ENCODE measurements at regions of chr5 and their contacts with region 1.

Region 1: DNA sequence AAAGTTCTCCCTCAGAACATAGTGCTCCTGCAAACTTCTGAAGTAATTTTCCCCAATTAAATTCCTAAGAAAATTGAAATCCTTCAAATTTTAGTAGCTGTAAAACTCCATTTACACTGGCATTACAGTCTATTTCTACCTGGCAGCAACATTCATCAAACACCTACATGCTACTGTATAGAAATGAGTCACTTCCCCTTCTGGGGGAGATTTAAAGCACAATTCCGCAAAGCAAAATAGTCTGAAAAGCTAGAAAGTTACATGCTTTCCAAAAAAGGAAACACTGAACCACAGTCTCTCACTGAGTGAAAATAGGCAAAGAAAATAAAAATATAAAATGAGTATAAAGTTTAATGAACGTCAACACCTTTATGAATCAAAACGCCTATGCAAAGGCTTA is 43.3 kb downstream of the MCTP1 start:
- DNase-seq: no peak
- H3K4me3 ChIP-seq: no peak overlapping the region
- H3K27ac ChIP-seq: no peak overlapping the region
- H3K4me1 ChIP-seq: no peaks in the 10 kb centered on the region
- H3K27me3 ChIP-seq: peaks cover 10% of the 10 kb centered on the region; the same call in 1 of the 2 replicates

Region 2: GRCh38 chr5:94968507-94969095 is 273.0 kb before region 1 on chr5:
- in situ Hi-C with region 1: loop called (anchors 10 kb)
- DNase-seq: peak; percentile 77
- H3K4me3 ChIP-seq: no peak overlapping the region
- H3K27ac ChIP-seq: no peak overlapping the region
- H3K4me1 ChIP-seq: no peaks in the 10 kb centered on the region
- H3K27me3 ChIP-seq: peaks cover 6% of the 10 kb centered on the region; the same call in 1 of the 2 replicates

Measured in GM23248 (cell line).